ENCODE measurements at regions of chr4 and their contacts with region 1.

Region 1: DNA sequence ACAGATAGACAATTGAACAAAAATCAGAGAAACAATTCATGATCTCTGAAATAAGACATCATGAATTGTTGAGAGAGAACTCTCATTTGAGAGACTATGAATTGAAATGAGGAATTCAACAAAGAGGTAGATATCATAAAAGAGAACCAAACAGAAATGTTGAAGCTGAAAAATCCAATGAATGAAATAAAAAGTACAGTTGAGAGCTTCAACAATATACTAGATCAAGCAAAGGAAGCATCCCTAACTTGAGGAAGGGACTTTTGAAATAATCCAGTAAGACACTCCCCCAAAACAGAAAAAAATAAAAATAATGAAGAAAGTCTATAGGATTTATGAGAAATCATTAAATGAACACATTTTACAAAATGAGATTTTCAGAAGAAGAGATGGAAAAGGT is 310.0 kb upstream of the PCDH10 start:
- DNase-seq: no peak
- H3K4me3 ChIP-seq: no peak overlapping the region
- H3K27ac ChIP-seq: no peak overlapping the region
- H3K4me1 ChIP-seq: no peaks in the 10 kb centered on the region
- H3K27me3 ChIP-seq: no peaks in the 10 kb centered on the region
- CTCF ChIP-seq: no peak
- POLR2A ChIP-seq: no peak

Region 2: DNA sequence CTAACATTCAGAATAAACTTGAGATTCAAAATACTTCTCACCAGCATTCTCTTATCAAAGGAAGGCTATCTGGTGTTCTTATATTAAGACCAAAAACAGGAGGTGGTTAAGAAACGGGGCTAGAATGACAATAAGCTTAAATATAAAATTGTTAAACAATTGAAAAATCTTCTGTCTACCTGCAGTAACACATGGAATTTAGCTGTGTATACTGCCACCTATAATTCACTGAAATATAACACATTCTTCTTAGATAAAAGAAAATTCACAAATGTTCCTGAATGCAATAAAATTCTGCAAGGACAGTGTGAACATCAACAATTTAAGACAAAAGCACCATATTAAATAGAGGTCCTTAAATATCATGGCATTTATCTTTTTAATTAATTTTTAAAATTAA is 298.5 kb after region 1 on chr4:
- CTCF ChIA-PET with region 1: no interaction called
- POLR2A ChIA-PET with region 1: no interaction called
- dilution Hi-C with region 1: no loop called
- intact Hi-C with region 1: loop called (anchors 2 kb)
- DNase-seq: peak; percentile 56
- H3K4me3 ChIP-seq: no peak overlapping the region
- H3K27ac ChIP-seq: no peak overlapping the region
- H3K4me1 ChIP-seq: no peaks in the 10 kb centered on the region
- H3K27me3 ChIP-seq: no peaks in the 10 kb centered on the region
- CTCF ChIP-seq: no peak
- POLR2A ChIP-seq: no peak